CD8-positive, alpha-beta T cell (primary cell): ENCODE measurements at regions of chr14 and their contacts with region 1.

Region 1: GRCh38 chr14:71320107-71320733 is 413.0 kb downstream of the PCNX1 start:
- DNase-seq: peak; percentile 96 to 100 (median 98)
- ATAC-seq: peak; percentile 87
- H3K4me3 ChIP-seq: peak within 1 kb of the TSS; percentile 83 to 84
- H3K4me3 Mint-ChIP-seq: peak within 1 kb of the TSS; percentile 85
- H3K27ac ChIP-seq: peak within 1 kb of the TSS; percentile 79 to 91
- H3K27ac Mint-ChIP-seq: peak within 1 kb of the TSS; percentile 92
- H3K4me1 ChIP-seq: peaks cover 32% of the 10 kb centered on the region
- H3K4me1 Mint-ChIP-seq: peaks cover 39% of the 10 kb centered on the region
- H3K27me3 ChIP-seq: no peaks in the 10 kb centered on the region
- H3K27me3 Mint-ChIP-seq: no peaks in the 10 kb centered on the region
- CTCF ChIP-seq: no peak

Region 2: DNA sequence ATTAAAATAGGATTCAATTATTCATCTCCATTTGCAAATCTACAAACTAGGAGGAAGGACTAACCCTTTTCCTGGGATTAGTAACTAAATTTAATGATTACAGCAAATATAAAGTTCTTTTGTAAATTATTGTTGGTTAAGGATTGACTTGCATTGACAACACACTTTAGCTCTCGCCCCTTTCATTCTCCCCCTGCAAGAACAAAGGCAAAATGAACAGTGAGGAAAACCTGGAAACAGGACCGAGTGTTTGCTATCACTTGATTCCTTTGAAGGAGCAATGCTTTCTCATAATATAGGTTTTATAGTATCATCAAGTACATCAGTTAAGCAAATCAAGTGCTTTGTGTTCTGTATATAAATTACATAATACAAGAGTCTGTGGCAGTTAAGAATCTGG is 953.3 kb before region 1 on chr14:
- CTCF ChIA-PET with region 1: no interaction called
- POLR2A ChIA-PET with region 1: no interaction called
- intact Hi-C with region 1: loop called in 1 of 2 experiments (anchors 5 kb)
- DNase-seq: no peak
- ATAC-seq: no peak
- H3K4me3 ChIP-seq: no peak overlapping the region
- H3K4me3 Mint-ChIP-seq: no peak overlapping the region
- H3K27ac ChIP-seq: no peak overlapping the region
- H3K27ac Mint-ChIP-seq: no peak overlapping the region
- H3K4me1 ChIP-seq: no peaks in the 10 kb centered on the region
- H3K4me1 Mint-ChIP-seq: no peaks in the 10 kb centered on the region
- H3K27me3 ChIP-seq: no peaks in the 10 kb centered on the region
- H3K27me3 Mint-ChIP-seq: no peaks in the 10 kb centered on the region
- CTCF ChIP-seq: no peak

Region 3: DNA sequence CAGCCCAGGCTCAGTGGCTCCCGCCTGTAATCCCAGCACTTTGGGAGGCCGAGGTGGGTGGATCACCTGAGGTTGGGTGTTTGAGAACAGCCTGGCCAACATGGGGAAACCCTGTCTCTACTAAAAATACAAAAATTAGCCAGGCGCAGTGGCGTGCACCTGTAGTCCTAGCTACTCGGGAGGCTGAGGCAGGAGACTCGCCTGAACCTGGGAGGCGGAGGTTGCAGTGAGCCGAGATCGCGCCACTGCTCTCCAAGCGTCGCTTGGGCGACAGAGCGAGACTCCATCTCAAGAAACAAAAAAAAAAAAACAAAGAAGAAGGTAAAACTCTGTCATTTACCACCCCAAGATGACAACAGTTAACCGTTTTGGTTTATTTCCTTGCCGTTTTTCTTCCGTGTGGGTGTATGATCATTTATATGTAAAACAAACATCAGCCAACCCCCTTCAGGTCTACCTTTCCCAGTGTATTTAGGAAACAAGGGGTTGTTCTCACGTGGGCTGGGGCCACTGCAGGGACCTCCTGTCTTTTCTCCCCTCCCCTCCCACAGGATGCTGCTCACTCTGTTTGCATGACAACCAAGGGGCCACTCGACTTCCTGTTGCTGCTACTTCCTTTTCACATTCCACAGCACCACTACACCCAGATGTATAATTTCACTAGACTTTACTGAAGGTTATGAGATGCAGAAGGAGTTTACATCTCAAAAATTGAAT is 665.0 kb before region 1 on chr14:
- CTCF ChIA-PET with region 1: no interaction called
- POLR2A ChIA-PET with region 1: no interaction called
- intact Hi-C with region 1: loop called in 1 of 2 experiments (anchors 2 kb)
- DNase-seq: peak; percentile 31 to 91 (median 79)
- ATAC-seq: peak; percentile 88
- H3K4me3 ChIP-seq: peak overlapping the region; percentile 32 to 46
- H3K4me3 Mint-ChIP-seq: peak overlapping the region; percentile 86
- H3K27ac ChIP-seq: peak overlapping the region; percentile 76 to 90
- H3K27ac Mint-ChIP-seq: peak overlapping the region; percentile 99
- H3K4me1 ChIP-seq: peaks cover 91% of the 10 kb centered on the region
- H3K4me1 Mint-ChIP-seq: peaks cover 93% of the 10 kb centered on the region
- H3K27me3 ChIP-seq: no peaks in the 10 kb centered on the region
- H3K27me3 Mint-ChIP-seq: no peaks in the 10 kb centered on the region
- CTCF ChIP-seq: no peak

Region 4: GRCh38 chr14:70919774-70920173 is 400.4 kb before region 1 on chr14:
- CTCF ChIA-PET with region 1: no interaction called
- POLR2A ChIA-PET with region 1: no interaction called
- intact Hi-C with region 1: loop called in 1 of 2 experiments (anchors 10 kb)
- DNase-seq: peak in 3 of 9 experiments; percentile 27 to 50 (median 32)
- ATAC-seq: peak; percentile 37
- H3K4me3 ChIP-seq: no peak overlapping the region
- H3K4me3 Mint-ChIP-seq: peak overlapping the region; percentile 59
- H3K27ac ChIP-seq: peak overlapping the region in 1 of 2 experiments; percentile 61
- H3K27ac Mint-ChIP-seq: peak overlapping the region; percentile 89
- H3K4me1 ChIP-seq: peaks cover 86% of the 10 kb centered on the region
- H3K4me1 Mint-ChIP-seq: peaks cover 90% of the 10 kb centered on the region
- H3K27me3 ChIP-seq: no peaks in the 10 kb centered on the region
- H3K27me3 Mint-ChIP-seq: no peaks in the 10 kb centered on the region
- CTCF ChIP-seq: no peak

Region 5: GRCh38 chr14:71403656-71404055 is 83.4 kb after region 1 on chr14:
- CTCF ChIA-PET with region 1: interaction called, 4 read pairs
- POLR2A ChIA-PET with region 1: interaction called, 7 read pairs
- intact Hi-C with region 1: loop called (anchors 2 kb)
- DNase-seq: peak in 4 of 9 experiments; percentile 17 to 63 (median 46)
- ATAC-seq: peak; percentile 50
- H3K4me3 ChIP-seq: no peak overlapping the region
- H3K4me3 Mint-ChIP-seq: no peak overlapping the region
- H3K27ac ChIP-seq: no peak overlapping the region
- H3K27ac Mint-ChIP-seq: peak overlapping the region; percentile 21
- H3K4me1 ChIP-seq: peaks cover 15% of the 10 kb centered on the region
- H3K4me1 Mint-ChIP-seq: peaks cover 32% of the 10 kb centered on the region
- H3K27me3 ChIP-seq: no peaks in the 10 kb centered on the region
- H3K27me3 Mint-ChIP-seq: no peaks in the 10 kb centered on the region
- CTCF ChIP-seq: no peak

Region 6: GRCh38 chr14:71753126-71753830 is 433.1 kb after region 1 on chr14:
- CTCF ChIA-PET with region 1: interaction called, 15 read pairs
- POLR2A ChIA-PET with region 1: interaction called, 3 read pairs
- intact Hi-C with region 1: loop called (anchors 1 to 2 kb)
- DNase-seq: peak; percentile 48 to 81 (median 73)
- ATAC-seq: peak; percentile 58
- H3K4me3 ChIP-seq: no peak overlapping the region
- H3K4me3 Mint-ChIP-seq: no peak overlapping the region
- H3K27ac ChIP-seq: no peak overlapping the region
- H3K27ac Mint-ChIP-seq: no peak overlapping the region
- H3K4me1 ChIP-seq: peaks cover 4% of the 10 kb centered on the region
- H3K4me1 Mint-ChIP-seq: no peaks in the 10 kb centered on the region
- H3K27me3 ChIP-seq: no peaks in the 10 kb centered on the region
- H3K27me3 Mint-ChIP-seq: no peaks in the 10 kb centered on the region
- CTCF ChIP-seq: peak; percentile 90